Right ventricle myocardium inferior (tissue), 1 donor: ENCODE measurements at regions of chr22 and their contacts with region 1.

Region 1: DNA sequence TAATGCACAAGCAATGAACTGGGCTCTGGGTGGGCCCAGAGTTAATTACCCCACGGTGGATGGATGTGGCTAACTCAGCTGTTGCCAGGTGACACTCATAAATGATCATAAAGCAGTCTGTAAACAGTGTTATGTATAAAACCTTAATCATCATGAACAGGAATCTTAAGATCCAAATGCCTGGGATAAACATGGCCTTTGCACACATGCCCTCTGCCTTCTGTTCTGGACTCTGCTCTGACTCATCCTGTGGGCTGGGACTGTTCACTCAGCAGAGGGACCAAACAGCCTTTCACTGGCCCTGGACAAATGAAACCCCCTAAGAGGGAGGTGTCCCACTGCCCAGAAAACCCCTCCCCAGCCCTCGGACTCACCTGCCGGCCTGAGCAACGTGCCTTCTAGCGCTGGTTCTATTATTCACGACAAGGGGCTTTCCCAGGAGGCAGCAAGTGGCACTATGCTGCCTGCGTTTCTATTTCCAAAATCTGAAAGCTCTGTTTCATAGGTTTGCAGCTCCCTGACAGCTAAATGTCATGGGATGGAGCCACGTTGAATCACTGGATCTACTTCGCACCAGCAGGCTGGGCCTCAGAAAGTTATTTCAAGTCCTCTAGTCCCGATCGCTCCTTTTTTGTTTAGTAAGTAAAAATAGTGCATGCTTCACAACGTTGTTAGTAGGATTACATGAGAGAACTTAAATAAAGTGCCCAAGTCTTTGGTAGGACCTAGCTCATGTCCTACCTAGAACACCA is 53.0 kb downstream of the LARGE1 start:
- DNase-seq: no peak
- ATAC-seq: no peak

Region 2: DNA sequence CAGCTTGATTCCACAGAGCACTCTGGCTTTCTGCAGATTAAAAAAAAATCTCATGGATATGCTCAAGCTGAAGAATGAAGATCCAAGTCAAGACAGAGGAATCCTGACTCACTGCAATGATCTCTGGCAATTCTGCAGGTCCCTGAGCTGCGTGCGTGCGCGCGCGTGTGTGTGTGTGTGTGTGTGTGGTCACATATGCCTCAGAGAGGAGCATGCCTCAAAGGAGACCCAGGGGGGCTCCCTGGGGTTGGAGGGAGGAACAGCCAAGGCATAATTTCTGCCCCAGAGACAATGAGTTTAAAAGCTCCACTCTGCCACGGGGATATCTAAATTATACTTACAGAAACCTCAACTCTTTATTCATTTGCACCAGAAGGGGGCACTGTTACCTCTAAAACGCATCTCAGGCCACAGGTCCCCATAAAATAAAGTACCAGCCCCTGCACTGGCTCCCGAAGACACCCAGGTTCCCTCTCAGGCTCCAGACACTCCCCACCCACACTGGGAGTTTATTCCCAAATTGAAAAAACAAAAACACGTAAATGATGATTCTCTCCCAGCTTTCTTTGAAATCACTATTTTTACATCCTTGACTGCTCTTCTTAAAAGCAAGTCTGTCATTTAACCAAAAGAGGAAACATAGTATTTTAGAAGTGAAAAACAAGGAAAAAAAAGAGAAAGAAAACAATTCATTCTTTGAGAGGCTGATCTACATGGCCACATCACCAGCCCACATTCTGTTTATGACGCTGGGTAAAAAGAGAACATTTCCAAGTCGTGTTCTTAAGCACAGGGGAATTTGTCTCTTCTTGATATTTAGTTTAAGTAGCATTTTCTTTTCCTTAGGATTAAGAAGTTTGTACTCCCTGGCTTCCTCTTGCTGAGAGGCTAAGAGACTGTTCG is 348.0 kb before region 1 on chr22:
- intact Hi-C with region 1: no loop called
- DNase-seq: no peak
- ATAC-seq: peak; percentile 65

Region 3: GRCh38 chr22:33823552-33823951 is 43.7 kb before region 1 on chr22:
- intact Hi-C with region 1: loop called (anchors 5 kb)
- DNase-seq: no peak
- ATAC-seq: peak; percentile 68